ENCODE measurements at regions of chr2 and their contacts with region 1.

Region 1: GRCh38 chr2:112726497-112727190 is 5.8 kb downstream of the NT5DC4 start:
- DNase-seq: peak; percentile 91
- ATAC-seq: peak; percentile 84
- H3K4me3 ChIP-seq: peak overlapping the region; percentile 44 to 75 (median 54)
- H3K27ac ChIP-seq: no peak overlapping the region
- H3K4me1 ChIP-seq: peaks cover 23% of the 10 kb centered on the region
- H3K27me3 ChIP-seq: peaks cover 0 to 7% of the 10 kb centered on the region in 2 experiments; a peak in 2 of 5 replicates
- CTCF ChIP-seq: peak; percentile 100
- EP300 ChIP-seq: peak in 1 of 2 experiments; percentile 56; a peak in 1 of 4 replicates
- POLR2A ChIP-seq: no peak
- RAD21 ChIP-seq: peak; percentile 100

Region 2: DNA sequence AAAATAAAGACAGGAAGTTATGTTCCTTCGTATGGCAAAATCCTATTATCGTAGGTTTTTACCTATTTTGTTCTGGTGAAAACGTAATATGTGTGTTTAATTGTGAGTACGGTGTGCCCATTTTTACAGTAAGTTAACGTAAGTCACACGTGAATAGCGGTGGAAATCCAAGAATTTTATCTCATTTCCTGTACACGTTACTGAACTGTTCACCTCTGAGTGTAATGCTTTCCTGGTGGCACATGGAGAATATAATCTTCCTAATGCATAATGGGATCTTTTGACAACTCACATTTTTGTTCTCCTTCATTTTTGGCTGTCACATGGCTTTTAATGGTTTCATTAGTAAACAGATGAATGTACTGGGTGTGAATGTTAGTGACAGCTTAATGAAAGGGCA is 1577.7 kb before region 1 on chr2:
- CTCF ChIA-PET with region 1: no interaction called
- POLR2A ChIA-PET with region 1: no interaction called
- in situ Hi-C with region 1: no loop called
- intact Hi-C with region 1: no loop called
- DNase-seq: no peak
- ATAC-seq: no peak
- H3K4me3 ChIP-seq: no peak overlapping the region
- H3K27ac ChIP-seq: no peak overlapping the region
- H3K4me1 ChIP-seq: peaks cover 9% of the 10 kb centered on the region
- H3K27me3 ChIP-seq: no peaks in the 10 kb centered on the region
- CTCF ChIP-seq: no peak
- EP300 ChIP-seq: no peak
- POLR2A ChIP-seq: no peak
- RAD21 ChIP-seq: no peak

Region 3: GRCh38 chr2:112259509-112260294 is 466.9 kb before region 1 on chr2:
- CTCF ChIA-PET with region 1: no interaction called
- POLR2A ChIA-PET with region 1: no interaction called
- in situ Hi-C with region 1: no loop called
- intact Hi-C with region 1: loop called (anchors 10 kb)
- DNase-seq: peak; percentile 65
- ATAC-seq: peak; percentile 71
- H3K4me3 ChIP-seq: peak overlapping the region; percentile 43 to 63 (median 44)
- H3K27ac ChIP-seq: no peak overlapping the region
- H3K4me1 ChIP-seq: peaks cover 23% of the 10 kb centered on the region
- H3K27me3 ChIP-seq: 0 out of 5 replicates have a peak, but pooled peaks cover 0 to 1% of the 10 kb centered on the region in 2 experiments
- CTCF ChIP-seq: peak; percentile 99
- EP300 ChIP-seq: no peak
- POLR2A ChIP-seq: no peak
- RAD21 ChIP-seq: peak; percentile 94

Region 4: GRCh38 chr2:112481050-112481527 is 245.6 kb before region 1 on chr2:
- CTCF ChIA-PET with region 1: interaction called, 3 read pairs
- POLR2A ChIA-PET with region 1: no interaction called
- in situ Hi-C with region 1: no loop called
- intact Hi-C with region 1: loop called (anchors 5 kb)
- DNase-seq: peak; percentile 76
- ATAC-seq: peak; percentile 91
- H3K4me3 ChIP-seq: peak overlapping the region; percentile 84 to 98 (median 97)
- H3K27ac ChIP-seq: peak overlapping the region; percentile 65
- H3K4me1 ChIP-seq: peaks cover 32% of the 10 kb centered on the region
- H3K27me3 ChIP-seq: no peaks in the 10 kb centered on the region; a peak in 1 of 5 replicates
- CTCF ChIP-seq: peak; percentile 97
- EP300 ChIP-seq: no peak
- POLR2A ChIP-seq: peak; percentile 28 to 29; a peak in 1 of 4 replicates
- RAD21 ChIP-seq: peak; percentile 89

Region 5: DNA sequence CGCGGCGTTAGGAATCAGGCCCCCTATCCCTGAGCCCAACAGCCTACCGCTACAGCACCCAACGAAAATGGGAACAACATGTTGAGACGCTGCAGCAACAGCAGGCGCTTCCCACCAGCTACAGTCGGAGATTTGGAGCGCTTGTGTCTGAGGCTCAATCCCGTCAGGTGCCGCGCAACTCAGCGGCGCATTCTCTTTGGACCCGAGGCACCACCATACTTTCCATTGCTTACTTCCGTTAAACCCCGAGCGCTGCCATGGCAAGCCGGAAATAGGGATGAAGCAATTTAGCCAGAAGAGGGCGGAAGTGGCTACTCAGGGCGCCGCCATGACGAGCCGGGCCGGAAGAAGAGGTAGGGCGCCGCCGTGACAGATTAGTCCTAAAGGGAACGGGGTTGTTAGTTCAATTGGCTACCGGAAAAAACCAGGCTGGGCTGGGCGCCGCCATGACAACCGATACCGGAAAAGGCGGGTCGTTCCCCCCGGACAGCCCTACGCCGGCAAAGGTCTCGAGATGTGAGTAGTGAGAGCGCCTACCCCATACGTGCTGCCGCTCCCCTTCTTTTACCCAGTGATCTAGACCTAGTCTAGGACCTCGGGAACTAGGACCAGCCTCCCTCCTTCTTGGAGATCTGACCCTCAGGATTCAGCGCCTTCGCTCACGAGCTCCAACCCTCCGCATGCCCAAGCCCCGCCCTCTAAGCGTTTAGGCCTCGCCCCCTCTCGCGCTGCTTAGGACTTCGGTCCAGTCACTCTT is 142.3 kb before region 1 on chr2 and contains the start of gene CHCHD5:
- CTCF ChIA-PET with region 1: interaction called, 3 read pairs
- POLR2A ChIA-PET with region 1: interaction called, 30 read pairs
- in situ Hi-C with region 1: no loop called
- intact Hi-C with region 1: no loop called
- DNase-seq: peak; percentile 98
- ATAC-seq: peak; percentile 89
- H3K4me3 ChIP-seq: peak within 1 kb of the TSS; percentile 76 to 95 (median 87)
- H3K27ac ChIP-seq: peak within 1 kb of the TSS; percentile 97
- H3K4me1 ChIP-seq: peaks cover 40% of the 10 kb centered on the region
- H3K27me3 ChIP-seq: peaks cover 0 to 4% of the 10 kb centered on the region in 2 experiments; a peak in 1 of 5 replicates
- CTCF ChIP-seq: peak; percentile 60
- EP300 ChIP-seq: peak in 1 of 2 experiments; percentile 58; a peak in 3 of 4 replicates
- POLR2A ChIP-seq: peak; percentile 88 to 95
- RAD21 ChIP-seq: no peak; the same call in 1 of the 2 replicates
- total RNA-seq, gene CHCHD5: 22.8 and 23.9 TPM in 2 replicates

Region 6: GRCh38 chr2:112601751-112602150 is 124.9 kb before region 1 on chr2:
- CTCF ChIA-PET with region 1: interaction called, 96 read pairs
- POLR2A ChIA-PET with region 1: interaction called, 11 read pairs
- in situ Hi-C with region 1: loop called (anchors 5 kb)
- intact Hi-C with region 1: loop called (anchors 1 kb)
- DNase-seq: no peak
- ATAC-seq: no peak
- H3K4me3 ChIP-seq: no peak overlapping the region
- H3K27ac ChIP-seq: no peak overlapping the region
- H3K4me1 ChIP-seq: peaks cover 20% of the 10 kb centered on the region
- H3K27me3 ChIP-seq: peaks cover 0 to 1% of the 10 kb centered on the region in 2 experiments; a peak in 1 of 5 replicates
- CTCF ChIP-seq: no peak
- EP300 ChIP-seq: no peak
- POLR2A ChIP-seq: no peak
- RAD21 ChIP-seq: no peak

Region 7: GRCh38 chr2:112626604-112627059 is 100.0 kb before region 1 on chr2:
- CTCF ChIA-PET with region 1: interaction called, 113 read pairs
- POLR2A ChIA-PET with region 1: interaction called, 11 read pairs
- in situ Hi-C with region 1: loop called (anchors 5 kb)
- intact Hi-C with region 1: loop called (anchors 1 kb)
- DNase-seq: peak; percentile 41
- ATAC-seq: peak; percentile 93
- H3K4me3 ChIP-seq: no peak overlapping the region; a peak in 1 of 6 replicates
- H3K27ac ChIP-seq: no peak overlapping the region
- H3K4me1 ChIP-seq: peaks cover 34% of the 10 kb centered on the region
- H3K27me3 ChIP-seq: peaks cover 0 to 28% of the 10 kb centered on the region in 2 experiments; a peak in 3 of 5 replicates
- CTCF ChIP-seq: peak; percentile 99
- EP300 ChIP-seq: no peak
- POLR2A ChIP-seq: no peak
- RAD21 ChIP-seq: peak; percentile 98

Region 8: DNA sequence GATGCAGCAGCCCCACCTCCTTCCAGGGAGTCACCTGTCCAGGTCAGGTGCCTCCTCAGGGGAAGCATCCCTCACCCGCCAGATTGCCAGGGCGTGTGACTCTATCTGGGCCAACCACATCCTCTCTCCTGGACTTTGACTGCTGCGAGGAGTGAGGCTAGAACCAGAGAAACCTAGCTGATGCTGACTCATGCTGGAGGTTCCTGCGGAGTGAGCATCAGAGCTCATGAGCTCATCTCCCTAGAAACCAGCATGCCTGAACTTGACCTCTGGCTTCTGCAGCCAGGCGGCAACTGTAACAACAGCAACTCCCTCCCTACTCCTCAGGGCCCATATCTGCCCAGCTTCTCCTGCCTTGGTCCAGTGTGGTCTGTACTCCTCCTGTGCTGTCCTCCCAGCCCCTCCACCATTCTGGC is 34.1 kb before region 1 on chr2:
- CTCF ChIA-PET with region 1: interaction called, 4 read pairs
- POLR2A ChIA-PET with region 1: interaction called, 7 read pairs
- in situ Hi-C with region 1: no loop called
- intact Hi-C with region 1: loop called (anchors 1 kb)
- DNase-seq: peak; percentile 96
- ATAC-seq: peak; percentile 92
- H3K4me3 ChIP-seq: no peak overlapping the region
- H3K27ac ChIP-seq: no peak overlapping the region
- H3K4me1 ChIP-seq: peaks cover 52% of the 10 kb centered on the region
- H3K27me3 ChIP-seq: no peaks in the 10 kb centered on the region
- CTCF ChIP-seq: peak; percentile 33
- EP300 ChIP-seq: peak; percentile 48 to 55; a peak in 1 of 4 replicates
- POLR2A ChIP-seq: no peak
- RAD21 ChIP-seq: no peak

Region 9: GRCh38 chr2:112764071-112765044 is 37.7 kb after region 1 on chr2 and contains the start of gene CKAP2L:
- CTCF ChIA-PET with region 1: no interaction called
- POLR2A ChIA-PET with region 1: no interaction called
- in situ Hi-C with region 1: no loop called
- intact Hi-C with region 1: no loop called
- DNase-seq: peak; percentile 98
- ATAC-seq: peak; percentile 96
- H3K4me3 ChIP-seq: peak within 1 kb of the TSS; percentile 80 to 91 (median 90)
- H3K27ac ChIP-seq: peak within 1 kb of the TSS; percentile 72
- H3K4me1 ChIP-seq: peaks cover 58% of the 10 kb centered on the region
- H3K27me3 ChIP-seq: no peaks in the 10 kb centered on the region; a peak in 1 of 5 replicates
- CTCF ChIP-seq: peak; percentile 57
- EP300 ChIP-seq: peak in 1 of 2 experiments; percentile 8; a peak in 1 of 4 replicates
- POLR2A ChIP-seq: peak; percentile 29 to 64; a peak in 3 of 4 replicates
- RAD21 ChIP-seq: no peak; the same call in none of the 2 replicates
- total RNA-seq, gene CKAP2L: 9.5 and 21.5 TPM in 2 replicates